Mammary epithelial cell (primary cell): ENCODE measurements at regions of chr16 and their contacts with region 1.

Region 1: DNA sequence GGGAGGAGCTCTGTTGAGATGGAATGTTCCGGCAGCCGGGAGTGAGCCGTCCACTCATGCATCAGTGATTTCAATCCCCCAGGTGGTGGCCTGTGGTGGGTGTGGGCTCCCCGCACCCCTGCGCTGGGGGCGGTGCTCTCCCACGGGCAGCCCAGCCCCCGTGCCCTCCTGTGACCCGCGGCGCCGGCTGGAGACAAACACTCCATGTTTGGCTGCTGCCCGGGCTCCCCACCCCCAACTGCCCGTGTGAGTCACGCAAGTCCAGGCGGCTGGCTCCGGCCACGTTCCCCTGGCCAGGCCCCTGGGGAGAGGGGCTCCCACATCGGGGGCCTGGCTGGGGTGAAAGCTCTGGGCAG is 29.4 kb downstream of the CACNA1H start:
- DNase-seq: peak; percentile 23
- H3K4me3 ChIP-seq: no peak overlapping the region
- H3K27ac ChIP-seq: no peak overlapping the region
- H3K4me1 ChIP-seq: peaks cover 13% of the 10 kb centered on the region
- H3K27me3 ChIP-seq: no peaks in the 10 kb centered on the region
- CTCF ChIP-seq: no peak

Region 2: GRCh38 chr16:1036726-1037393 is 145.4 kb before region 1 on chr16:
- CTCF ChIA-PET with region 1: no interaction called
- dilution Hi-C with region 1: loop called (anchors 5 kb)
- in situ Hi-C with region 1: no loop called
- intact Hi-C with region 1: no loop called
- DNase-seq: peak; percentile 75
- H3K4me3 ChIP-seq: peak overlapping the region in 1 of 3 experiments; percentile 9
- H3K27ac ChIP-seq: no peak overlapping the region
- H3K4me1 ChIP-seq: peaks cover 14% of the 10 kb centered on the region
- H3K27me3 ChIP-seq: no peaks in the 10 kb centered on the region
- CTCF ChIP-seq: no peak

Region 3: DNA sequence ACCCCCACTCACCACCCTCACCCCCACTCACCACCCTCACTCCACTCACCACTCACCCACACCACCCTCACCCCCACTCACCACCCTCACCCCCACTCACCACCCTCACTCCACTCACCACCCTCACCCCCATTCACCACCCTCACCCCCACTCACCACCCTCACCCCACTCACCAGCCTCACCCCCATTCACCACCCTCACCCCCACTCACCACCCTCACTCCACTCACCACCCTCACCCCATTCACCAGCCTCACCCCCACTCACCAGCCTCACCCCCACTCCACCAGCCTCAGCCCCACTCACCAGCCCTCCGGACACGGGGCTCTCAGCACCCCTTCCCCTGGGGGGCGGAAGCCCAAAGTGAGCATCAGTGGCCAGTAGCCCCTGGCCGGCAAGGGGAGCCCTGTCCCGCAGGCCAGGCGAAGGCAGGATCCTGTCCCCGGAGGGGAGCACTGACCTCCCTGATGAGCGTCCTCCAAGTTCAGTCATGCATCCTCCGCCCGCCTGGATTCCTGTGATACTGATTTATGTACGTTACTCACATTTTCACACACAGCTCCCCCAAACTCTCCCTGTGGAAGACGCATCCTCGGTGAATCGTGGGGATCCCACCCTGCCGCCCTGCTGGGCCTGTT is 68.3 kb before region 1 on chr16:
- CTCF ChIA-PET with region 1: no interaction called
- dilution Hi-C with region 1: loop called (anchors 5 kb)
- in situ Hi-C with region 1: no loop called
- intact Hi-C with region 1: no loop called
- DNase-seq: no peak
- H3K4me3 ChIP-seq: no peak overlapping the region
- H3K27ac ChIP-seq: no peak overlapping the region
- H3K4me1 ChIP-seq: peaks cover 3% of the 10 kb centered on the region
- H3K27me3 ChIP-seq: peaks cover 6% of the 10 kb centered on the region
- CTCF ChIP-seq: no peak

Region 4: DNA sequence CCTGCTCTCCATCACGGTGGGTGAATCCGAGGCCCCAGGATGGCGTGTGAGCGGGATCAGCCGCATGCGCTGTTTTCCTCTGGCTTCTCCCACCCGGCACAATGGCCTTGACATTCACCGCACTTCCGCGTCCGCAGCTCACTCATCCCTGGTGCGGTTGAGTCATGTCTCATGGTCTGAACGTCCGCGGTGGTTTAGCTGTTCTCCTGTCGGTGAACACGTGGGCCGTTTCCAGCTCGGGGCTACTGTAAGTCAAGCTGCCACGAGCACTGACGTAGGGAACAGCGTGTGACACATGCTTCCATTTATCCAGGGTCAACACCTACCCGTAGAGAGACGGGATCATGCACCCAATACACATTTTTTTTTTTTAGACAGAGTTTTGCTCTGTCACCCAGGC is 44.7 kb before region 1 on chr16:
- CTCF ChIA-PET with region 1: no interaction called
- dilution Hi-C with region 1: loop called (anchors 5 kb)
- in situ Hi-C with region 1: no loop called
- intact Hi-C with region 1: no loop called
- DNase-seq: no peak
- H3K4me3 ChIP-seq: no peak overlapping the region
- H3K27ac ChIP-seq: no peak overlapping the region
- H3K4me1 ChIP-seq: no peaks in the 10 kb centered on the region
- H3K27me3 ChIP-seq: no peaks in the 10 kb centered on the region
- CTCF ChIP-seq: no peak

Region 5: DNA sequence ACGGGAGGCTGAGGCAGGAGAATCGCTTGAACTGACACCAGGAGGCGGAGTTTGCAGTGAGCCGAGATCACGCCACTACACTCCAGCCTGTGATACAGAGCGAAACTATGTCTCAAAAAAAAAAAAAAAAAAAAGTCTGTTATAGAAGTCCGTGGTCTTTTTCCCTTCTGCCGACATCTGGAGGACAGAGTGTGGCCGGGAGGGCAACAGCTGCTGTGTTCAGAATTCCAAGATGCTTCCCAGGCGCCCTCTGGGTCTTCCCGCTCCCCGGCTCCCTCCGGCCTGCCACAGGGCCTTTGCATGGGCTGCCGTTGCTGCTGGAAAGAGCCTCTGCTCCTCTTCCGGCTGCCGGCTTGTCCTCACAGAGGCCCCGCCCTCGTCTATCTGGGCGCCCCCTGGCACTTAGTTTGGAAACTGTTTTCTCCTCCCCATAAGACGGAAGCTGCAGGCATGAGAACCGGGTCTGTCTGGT is 31.7 kb before region 1 on chr16:
- CTCF ChIA-PET with region 1: no interaction called
- dilution Hi-C with region 1: no loop called
- in situ Hi-C with region 1: no loop called
- intact Hi-C with region 1: no loop called
- DNase-seq: no peak
- H3K4me3 ChIP-seq: no peak overlapping the region
- H3K27ac ChIP-seq: no peak overlapping the region
- H3K4me1 ChIP-seq: no peaks in the 10 kb centered on the region
- H3K27me3 ChIP-seq: peaks cover 16% of the 10 kb centered on the region
- CTCF ChIP-seq: no peak

Region 6: DNA sequence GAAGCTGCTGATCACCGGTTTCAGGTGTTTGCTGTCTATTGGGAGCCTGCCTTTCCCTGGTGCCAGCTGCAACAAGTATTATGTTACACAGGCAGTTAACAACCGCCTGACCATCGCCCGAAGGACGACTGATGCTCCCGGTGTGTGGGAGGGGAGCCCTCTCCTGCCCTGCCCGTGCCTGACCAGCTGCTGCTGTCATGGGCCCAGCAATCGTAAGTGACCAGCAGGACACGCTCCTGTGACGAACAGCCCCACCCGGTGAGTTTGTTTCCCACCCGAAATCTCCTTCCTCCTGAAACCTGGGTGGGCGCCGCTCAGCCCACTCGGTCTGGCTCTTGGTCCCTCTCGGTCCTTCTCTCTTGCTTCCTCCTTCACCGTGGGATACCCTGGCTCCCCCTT is 109.3 kb after region 1 on chr16:
- CTCF ChIA-PET with region 1: no interaction called
- dilution Hi-C with region 1: loop called (anchors 5 kb)
- in situ Hi-C with region 1: no loop called
- intact Hi-C with region 1: no loop called
- DNase-seq: no peak
- H3K4me3 ChIP-seq: no peak overlapping the region
- H3K27ac ChIP-seq: no peak overlapping the region
- H3K4me1 ChIP-seq: peaks cover 9% of the 10 kb centered on the region
- H3K27me3 ChIP-seq: peaks cover 16% of the 10 kb centered on the region
- CTCF ChIP-seq: no peak

Region 7: DNA sequence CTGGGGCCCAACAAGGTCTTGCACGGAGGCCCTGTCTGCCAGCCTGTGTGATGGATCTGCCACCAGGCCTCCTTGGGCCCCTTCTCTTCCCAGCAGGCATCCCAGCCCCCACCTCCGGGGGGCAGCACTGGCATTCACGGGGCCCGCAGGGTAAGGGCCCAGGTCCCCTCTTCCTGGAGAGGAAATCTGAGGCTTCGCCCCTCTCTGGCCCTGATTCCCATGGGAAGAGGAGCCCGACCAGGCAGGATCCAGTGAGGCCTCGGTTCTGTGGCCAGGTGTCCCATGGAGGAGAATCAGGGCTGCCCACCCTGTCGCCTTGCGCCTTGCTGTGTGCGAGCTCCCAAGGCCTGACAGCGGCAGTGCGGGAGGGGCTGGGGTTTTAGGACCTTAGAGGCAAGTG is 1403.9 kb after region 1 on chr16:
- CTCF ChIA-PET with region 1: no interaction called
- dilution Hi-C with region 1: no loop called
- in situ Hi-C with region 1: no loop called
- intact Hi-C with region 1: no loop called
- DNase-seq: no peak
- H3K4me3 ChIP-seq: no peak overlapping the region
- H3K27ac ChIP-seq: no peak overlapping the region
- H3K4me1 ChIP-seq: no peaks in the 10 kb centered on the region
- H3K27me3 ChIP-seq: no peaks in the 10 kb centered on the region
- CTCF ChIP-seq: no peak